Activated naive CD4-positive, alpha-beta T cell treated with anti-CD3 and anti-CD28 coated beads for 36 hours (primary cell): ENCODE measurements at regions of chr1 and their contacts with region 1.

Region 1: DNA sequence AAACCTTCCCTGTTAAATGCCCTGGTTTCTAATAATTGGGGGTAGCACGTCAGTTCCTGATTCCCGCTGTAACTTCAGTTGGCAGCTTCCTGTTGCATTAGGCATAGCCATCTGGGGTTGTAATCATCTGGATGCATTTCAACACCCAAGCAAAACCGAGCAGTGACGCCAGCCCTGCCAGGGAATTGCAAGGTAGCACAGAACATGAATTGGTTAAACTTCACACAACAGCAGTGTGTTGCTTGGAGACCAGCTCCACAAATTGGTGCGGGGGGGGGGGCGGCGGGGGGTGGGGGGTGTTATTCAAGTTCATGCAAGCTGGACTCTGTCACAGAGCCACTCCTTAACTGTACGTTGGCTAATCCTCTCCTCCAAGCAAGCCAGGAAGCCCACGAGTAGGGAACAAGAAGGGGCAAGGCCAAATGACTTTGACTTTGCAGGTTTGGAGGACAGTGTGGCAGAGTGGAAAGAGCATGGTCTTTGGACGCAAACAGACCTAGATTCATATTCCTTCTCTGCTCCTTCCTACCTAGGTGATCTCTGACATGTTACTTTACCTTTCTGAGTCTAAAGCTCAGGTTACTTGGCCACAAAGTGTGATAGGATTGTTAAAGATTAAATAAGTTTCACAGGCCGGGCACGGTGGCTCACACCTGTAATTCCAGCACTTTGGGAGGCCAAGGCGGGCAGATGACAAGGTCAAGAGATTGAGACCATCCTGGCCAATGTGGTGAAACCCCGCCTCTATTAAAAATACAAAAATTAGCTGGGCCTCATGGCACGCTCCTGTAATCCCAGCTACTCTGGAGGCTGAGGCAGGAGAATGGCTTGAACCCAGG is 4.7 kb downstream of the LAX1 start:
- DNase-seq: no peak
- H3K4me3 Mint-ChIP-seq: no peak overlapping the region
- H3K27ac Mint-ChIP-seq: no peak overlapping the region
- H3K4me1 Mint-ChIP-seq: peaks cover 25% of the 10 kb centered on the region
- H3K27me3 Mint-ChIP-seq: no peaks in the 10 kb centered on the region

Region 2: DNA sequence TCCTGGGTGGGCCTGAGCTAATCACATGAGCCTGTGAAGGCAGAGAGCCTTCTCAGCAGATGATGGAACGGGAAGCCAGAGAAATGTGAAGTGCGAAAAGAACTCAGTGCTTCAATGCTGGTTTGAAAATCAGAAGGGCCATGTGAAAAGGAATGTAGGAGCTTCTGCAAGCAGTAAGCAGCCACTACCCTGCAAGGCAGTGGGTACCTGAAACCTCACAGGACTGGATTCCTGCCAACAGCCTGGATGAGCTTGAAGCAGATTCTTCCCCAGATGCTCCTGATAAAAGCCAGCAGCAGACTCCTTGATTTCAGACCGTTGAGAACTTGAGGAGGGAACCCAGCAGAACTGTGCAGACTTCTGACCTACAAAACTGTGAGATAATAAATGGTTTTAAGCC is 1218.0 kb before region 1 on chr1:
- CTCF ChIA-PET with region 1: no interaction called
- intact Hi-C with region 1: no loop called
- DNase-seq: no peak
- H3K4me3 Mint-ChIP-seq: no peak overlapping the region
- H3K27ac Mint-ChIP-seq: no peak overlapping the region
- H3K4me1 Mint-ChIP-seq: no peaks in the 10 kb centered on the region
- H3K27me3 Mint-ChIP-seq: no peaks in the 10 kb centered on the region

Region 3: GRCh38 chr1:203290261-203291089 is 479.2 kb before region 1 on chr1:
- CTCF ChIA-PET with region 1: no interaction called
- intact Hi-C with region 1: loop called (anchors 10 kb)
- DNase-seq: peak; percentile 99
- H3K4me3 Mint-ChIP-seq: peak overlapping the region; percentile 83
- H3K27ac Mint-ChIP-seq: peak overlapping the region; percentile 99
- H3K4me1 Mint-ChIP-seq: peaks cover 82% of the 10 kb centered on the region
- H3K27me3 Mint-ChIP-seq: no peaks in the 10 kb centered on the region

Region 4: DNA sequence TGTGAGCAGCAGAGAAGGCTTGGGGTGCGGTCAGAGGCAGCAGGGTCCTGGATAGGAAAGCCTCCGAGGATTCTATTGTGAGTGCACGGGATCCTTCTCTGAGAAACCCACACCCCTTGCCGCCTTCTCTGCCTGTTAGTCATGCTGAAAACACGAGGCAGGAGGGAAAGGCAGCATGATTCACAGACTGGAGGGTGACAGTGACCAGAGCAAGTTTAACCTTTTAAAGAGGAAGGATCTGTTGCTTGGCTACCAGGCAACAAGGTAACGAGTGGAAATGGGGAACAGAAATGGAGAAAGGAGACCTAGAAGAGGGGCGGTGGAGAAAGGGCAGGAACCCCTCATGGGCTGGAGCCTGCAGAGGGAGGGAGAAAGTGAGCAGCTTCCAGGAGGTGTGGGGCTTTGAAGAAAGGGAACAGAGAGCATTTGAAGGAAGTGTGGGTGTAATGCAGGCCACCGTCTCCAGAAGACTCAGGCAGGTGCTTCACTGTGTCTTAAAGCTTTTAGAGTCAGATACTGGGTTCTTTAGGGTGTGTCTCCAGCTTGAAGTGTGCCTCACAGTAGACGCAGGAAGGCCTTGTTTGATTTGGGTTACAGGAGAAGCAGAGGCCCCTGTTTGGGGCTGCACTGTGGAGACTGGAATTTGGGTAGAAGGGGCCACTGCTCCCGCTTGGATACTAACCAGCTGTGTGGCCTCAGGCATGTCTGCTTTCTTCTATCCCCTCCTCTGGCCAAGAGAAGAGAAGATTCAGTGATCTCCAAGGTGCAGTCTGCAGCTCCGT is 256.7 kb before region 1 on chr1:
- CTCF ChIA-PET with region 1: no interaction called
- intact Hi-C with region 1: loop called (anchors 2 kb)
- DNase-seq: peak; percentile 83
- H3K4me3 Mint-ChIP-seq: peak overlapping the region; percentile 42
- H3K27ac Mint-ChIP-seq: peak overlapping the region; percentile 82
- H3K4me1 Mint-ChIP-seq: peaks cover 36% of the 10 kb centered on the region
- H3K27me3 Mint-ChIP-seq: no peaks in the 10 kb centered on the region

Region 5: DNA sequence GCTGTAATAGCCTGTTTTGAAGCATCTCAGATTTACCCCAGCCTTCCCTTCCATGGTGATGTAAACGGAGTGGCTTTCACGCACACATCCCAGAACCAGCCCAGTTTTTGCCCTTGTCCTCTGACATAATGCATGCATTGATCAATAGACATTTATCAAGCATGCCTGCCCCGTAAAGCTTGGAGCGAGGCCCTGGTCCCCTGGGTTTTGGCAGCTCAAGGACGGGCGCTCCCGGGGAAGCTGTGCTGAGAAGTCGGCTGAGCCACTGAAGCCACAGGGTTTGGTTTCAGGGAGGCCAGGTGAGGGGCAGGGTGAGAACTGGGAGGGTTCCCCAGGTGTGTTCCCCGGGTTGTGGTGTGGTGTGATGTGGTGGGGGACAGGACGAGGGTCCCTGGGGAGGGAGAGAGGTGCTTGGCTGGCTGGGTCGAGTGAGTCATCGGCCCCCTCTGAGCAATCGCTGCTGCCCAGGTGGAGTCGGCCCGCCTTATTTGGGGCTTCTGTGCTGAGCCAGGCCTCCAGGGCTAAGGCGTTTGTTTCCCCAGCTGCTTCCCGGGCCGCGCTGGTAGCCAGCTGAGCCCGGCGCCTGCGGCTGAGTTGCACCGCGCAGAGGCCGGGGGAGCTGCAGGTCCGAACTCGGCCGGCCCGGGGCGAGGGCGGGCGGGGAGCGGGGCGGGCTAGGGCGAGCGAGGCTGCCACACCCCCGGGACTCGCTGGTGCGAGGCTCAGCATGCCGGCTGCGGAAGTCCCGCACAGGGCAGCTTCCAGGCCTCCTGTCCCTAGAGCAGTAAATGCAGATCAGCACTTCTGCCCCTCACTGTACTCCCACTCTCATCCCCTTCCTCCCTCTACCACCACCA is 119.5 kb before region 1 on chr1:
- CTCF ChIA-PET with region 1: no interaction called
- intact Hi-C with region 1: loop called (anchors 1 kb)
- DNase-seq: peak; percentile 76
- H3K4me3 Mint-ChIP-seq: peak overlapping the region; percentile 62
- H3K27ac Mint-ChIP-seq: peak overlapping the region; percentile 46
- H3K4me1 Mint-ChIP-seq: peaks cover 67% of the 10 kb centered on the region
- H3K27me3 Mint-ChIP-seq: no peaks in the 10 kb centered on the region

Region 6: GRCh38 chr1:203733009-203733863 is 36.5 kb before region 1 on chr1:
- CTCF ChIA-PET with region 1: no interaction called
- intact Hi-C with region 1: loop called (anchors 5 kb)
- DNase-seq: no peak
- H3K4me3 Mint-ChIP-seq: no peak overlapping the region
- H3K27ac Mint-ChIP-seq: no peak overlapping the region
- H3K4me1 Mint-ChIP-seq: no peaks in the 10 kb centered on the region
- H3K27me3 Mint-ChIP-seq: no peaks in the 10 kb centered on the region

Region 7: GRCh38 chr1:203754455-203754864 is 15.3 kb before region 1 on chr1:
- CTCF ChIA-PET with region 1: no interaction called
- intact Hi-C with region 1: loop called (anchors 1 kb)
- DNase-seq: peak; percentile 69
- H3K4me3 Mint-ChIP-seq: no peak overlapping the region
- H3K27ac Mint-ChIP-seq: peak overlapping the region; percentile 88
- H3K4me1 Mint-ChIP-seq: peaks cover 24% of the 10 kb centered on the region
- H3K27me3 Mint-ChIP-seq: no peaks in the 10 kb centered on the region

Region 8: GRCh38 chr1:203823306-203823705 is 53.6 kb after region 1 on chr1:
- CTCF ChIA-PET with region 1: no interaction called
- intact Hi-C with region 1: loop called (anchors 1 kb)
- DNase-seq: no peak
- H3K4me3 Mint-ChIP-seq: no peak overlapping the region
- H3K27ac Mint-ChIP-seq: peak overlapping the region; percentile 65
- H3K4me1 Mint-ChIP-seq: peaks cover 15% of the 10 kb centered on the region
- H3K27me3 Mint-ChIP-seq: no peaks in the 10 kb centered on the region

Region 9: GRCh38 chr1:204051258-204051657 is 281.5 kb after region 1 on chr1:
- CTCF ChIA-PET with region 1: no interaction called
- intact Hi-C with region 1: no loop called
- DNase-seq: no peak
- H3K4me3 Mint-ChIP-seq: no peak overlapping the region
- H3K27ac Mint-ChIP-seq: no peak overlapping the region
- H3K4me1 Mint-ChIP-seq: no peaks in the 10 kb centered on the region
- H3K27me3 Mint-ChIP-seq: peaks cover 2% of the 10 kb centered on the region

Region 10: DNA sequence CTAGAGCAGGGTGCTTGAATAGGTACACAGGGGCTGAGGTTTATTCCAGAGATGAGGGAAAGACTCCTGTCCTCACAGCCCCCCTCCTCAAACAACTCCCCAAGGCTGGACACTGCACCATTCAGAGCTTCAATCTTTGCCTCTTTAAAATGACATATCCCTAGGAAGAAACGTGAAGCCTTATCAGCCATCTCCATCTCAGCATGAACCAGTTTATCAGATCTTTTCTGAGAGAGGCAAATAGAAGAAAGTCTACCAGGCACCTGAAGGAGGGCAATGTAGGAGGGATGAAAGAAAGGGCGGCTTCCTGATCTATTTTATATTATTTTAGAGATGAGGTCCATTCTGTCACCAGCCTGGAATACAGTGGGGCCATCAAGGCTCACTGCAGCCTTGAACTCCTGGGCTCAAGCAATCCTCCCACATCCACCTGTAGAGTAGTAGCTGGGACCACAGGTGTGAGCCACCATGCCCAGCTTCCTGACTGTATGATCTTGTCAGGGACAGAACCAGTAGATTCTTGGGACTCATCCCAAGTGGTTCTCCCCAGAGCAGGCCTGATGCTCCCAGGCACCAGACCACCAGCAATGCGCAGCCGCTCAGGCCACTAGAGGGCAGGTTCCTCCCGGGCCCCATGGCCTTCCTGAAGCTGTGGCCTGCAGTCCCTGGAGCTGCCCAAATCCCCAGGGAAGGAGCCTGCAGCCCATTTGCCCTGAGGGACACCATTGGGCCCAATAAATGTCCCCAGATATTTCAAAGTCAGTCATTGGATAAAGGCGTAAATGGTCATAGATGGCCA is 488.4 kb after region 1 on chr1:
- CTCF ChIA-PET with region 1: no interaction called
- intact Hi-C with region 1: no loop called
- DNase-seq: peak; percentile 62
- H3K4me3 Mint-ChIP-seq: no peak overlapping the region
- H3K27ac Mint-ChIP-seq: no peak overlapping the region
- H3K4me1 Mint-ChIP-seq: no peaks in the 10 kb centered on the region
- H3K27me3 Mint-ChIP-seq: no peaks in the 10 kb centered on the region